ENCODE measurements at regions of chr6 and their contacts with region 1.

Region 1: DNA sequence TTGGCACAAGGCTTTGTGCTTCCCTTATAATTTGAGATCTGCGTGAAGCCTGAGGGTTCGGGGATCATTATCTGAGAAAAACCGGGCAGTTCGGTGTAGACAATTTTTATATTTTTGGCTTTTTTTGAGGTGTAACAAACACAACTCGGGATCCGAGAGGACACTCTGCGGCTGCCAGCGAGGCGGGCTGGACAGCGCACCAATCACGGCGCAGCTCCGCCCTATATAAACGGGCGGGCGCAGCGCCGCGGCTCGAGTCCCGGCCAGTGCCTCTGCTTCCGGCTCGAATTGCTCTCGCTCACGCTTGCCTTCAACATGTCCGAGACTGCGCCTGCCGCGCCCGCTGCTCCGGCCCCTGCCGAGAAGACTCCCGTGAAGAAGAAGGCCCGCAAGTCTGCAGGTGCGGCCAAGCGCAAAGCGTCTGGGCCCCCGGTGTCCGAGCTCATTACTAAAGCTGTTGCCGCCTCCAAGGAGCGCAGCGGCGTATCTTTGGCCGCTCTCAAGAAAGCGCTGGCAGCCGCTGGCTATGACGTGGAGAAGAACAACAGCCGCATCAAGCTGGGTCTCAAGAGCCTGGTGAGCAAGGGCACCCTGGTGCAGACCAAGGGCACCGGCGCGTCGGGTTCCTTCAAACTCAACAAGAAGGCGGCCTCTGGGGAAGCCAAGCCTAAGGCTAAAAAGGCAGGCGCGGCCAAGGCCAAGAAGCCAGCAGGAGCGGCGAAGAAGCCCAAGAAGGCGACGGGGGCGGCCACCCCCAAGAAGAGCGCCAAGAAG is 69.0 kb downstream of the HFE start:
- DNase-seq: peak; percentile 94
- H3K4me3 ChIP-seq: peak overlapping the region; percentile 62 to 80 (median 74)
- H3K27ac ChIP-seq: peak overlapping the region; percentile 88
- H3K4me1 ChIP-seq: peaks cover 31% of the 10 kb centered on the region
- H3K27me3 ChIP-seq: no peaks in the 10 kb centered on the region
- CTCF ChIP-seq: peak in 1 of 2 donors; percentile 12

Region 2: GRCh38 chr6:24313251-24314141 is 1842.8 kb before region 1 on chr6:
- CTCF ChIA-PET with region 1: interaction called, 11 read pairs
- dilution Hi-C with region 1: no loop called
- in situ Hi-C with region 1: no loop called
- intact Hi-C with region 1: no loop called
- DNase-seq: peak; percentile 46
- H3K4me3 ChIP-seq: no peak overlapping the region
- H3K27ac ChIP-seq: no peak overlapping the region
- H3K4me1 ChIP-seq: peaks cover 5% of the 10 kb centered on the region
- H3K27me3 ChIP-seq: no peaks in the 10 kb centered on the region
- CTCF ChIP-seq: no peak

Region 3: DNA sequence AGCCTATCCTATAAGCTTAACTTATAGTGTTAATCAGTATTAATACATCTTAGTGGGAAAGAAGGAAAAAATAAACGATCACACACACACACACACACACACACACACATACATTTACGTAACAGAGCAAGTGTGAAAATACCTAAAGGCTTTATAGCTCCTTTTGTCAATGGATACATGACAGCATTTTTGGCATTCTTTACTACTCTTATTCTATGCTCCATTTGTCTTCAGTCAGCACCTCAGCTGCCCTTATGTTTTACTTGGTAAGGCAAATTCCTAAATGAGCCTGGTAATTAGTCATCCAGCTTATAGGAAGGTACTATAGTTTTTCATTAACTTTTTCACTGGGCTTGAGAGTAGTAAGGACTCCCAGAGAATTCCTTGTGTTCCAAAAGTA is 257.1 kb before region 1 on chr6:
- CTCF ChIA-PET with region 1: no interaction called
- dilution Hi-C with region 1: no loop called
- in situ Hi-C with region 1: no loop called
- intact Hi-C with region 1: no loop called
- DNase-seq: no peak
- H3K4me3 ChIP-seq: no peak overlapping the region
- H3K27ac ChIP-seq: no peak overlapping the region
- H3K4me1 ChIP-seq: no peaks in the 10 kb centered on the region
- H3K27me3 ChIP-seq: no peaks in the 10 kb centered on the region
- CTCF ChIP-seq: no peak

Region 4: GRCh38 chr6:26031595-26032339 is 124.5 kb before region 1 on chr6:
- CTCF ChIA-PET with region 1: no interaction called
- dilution Hi-C with region 1: no loop called
- in situ Hi-C with region 1: no loop called
- intact Hi-C with region 1: loop called (anchors 2 kb)
- DNase-seq: peak; percentile 96
- H3K4me3 ChIP-seq: peak overlapping the region; percentile 53 to 62 (median 61)
- H3K27ac ChIP-seq: peak overlapping the region; percentile 85
- H3K4me1 ChIP-seq: peaks cover 26% of the 10 kb centered on the region
- H3K27me3 ChIP-seq: no peaks in the 10 kb centered on the region
- CTCF ChIP-seq: peak; percentile 5 to 23

Region 5: GRCh38 chr6:26043384-26044139 is 112.7 kb before region 1 on chr6:
- CTCF ChIA-PET with region 1: no interaction called
- dilution Hi-C with region 1: no loop called
- in situ Hi-C with region 1: no loop called
- intact Hi-C with region 1: no loop called
- DNase-seq: peak; percentile 95
- H3K4me3 ChIP-seq: peak overlapping the region; percentile 37 to 43 (median 42)
- H3K27ac ChIP-seq: peak overlapping the region; percentile 79
- H3K4me1 ChIP-seq: peaks cover 27% of the 10 kb centered on the region
- H3K27me3 ChIP-seq: no peaks in the 10 kb centered on the region
- CTCF ChIP-seq: no peak

Region 6: GRCh38 chr6:26103770-26104456 is 52.4 kb before region 1 on chr6:
- CTCF ChIA-PET with region 1: no interaction called
- dilution Hi-C with region 1: no loop called
- in situ Hi-C with region 1: no loop called
- intact Hi-C with region 1: loop called (anchors 1 kb)
- DNase-seq: peak; percentile 95
- H3K4me3 ChIP-seq: peak overlapping the region; percentile 45 to 47 (median 47)
- H3K27ac ChIP-seq: peak overlapping the region; percentile 93
- H3K4me1 ChIP-seq: peaks cover 8% of the 10 kb centered on the region
- H3K27me3 ChIP-seq: no peaks in the 10 kb centered on the region
- CTCF ChIP-seq: peak; percentile 33 to 45

Region 7: GRCh38 chr6:26175428-26176181 is 19.3 kb after region 1 on chr6:
- CTCF ChIA-PET with region 1: no interaction called
- dilution Hi-C with region 1: no loop called
- in situ Hi-C with region 1: no loop called
- intact Hi-C with region 1: loop called (anchors 1 kb)
- DNase-seq: peak; percentile 60
- H3K4me3 ChIP-seq: no peak overlapping the region
- H3K27ac ChIP-seq: no peak overlapping the region
- H3K4me1 ChIP-seq: peaks cover 3% of the 10 kb centered on the region
- H3K27me3 ChIP-seq: no peaks in the 10 kb centered on the region
- CTCF ChIP-seq: peak; percentile 52 to 64

Region 8: DNA sequence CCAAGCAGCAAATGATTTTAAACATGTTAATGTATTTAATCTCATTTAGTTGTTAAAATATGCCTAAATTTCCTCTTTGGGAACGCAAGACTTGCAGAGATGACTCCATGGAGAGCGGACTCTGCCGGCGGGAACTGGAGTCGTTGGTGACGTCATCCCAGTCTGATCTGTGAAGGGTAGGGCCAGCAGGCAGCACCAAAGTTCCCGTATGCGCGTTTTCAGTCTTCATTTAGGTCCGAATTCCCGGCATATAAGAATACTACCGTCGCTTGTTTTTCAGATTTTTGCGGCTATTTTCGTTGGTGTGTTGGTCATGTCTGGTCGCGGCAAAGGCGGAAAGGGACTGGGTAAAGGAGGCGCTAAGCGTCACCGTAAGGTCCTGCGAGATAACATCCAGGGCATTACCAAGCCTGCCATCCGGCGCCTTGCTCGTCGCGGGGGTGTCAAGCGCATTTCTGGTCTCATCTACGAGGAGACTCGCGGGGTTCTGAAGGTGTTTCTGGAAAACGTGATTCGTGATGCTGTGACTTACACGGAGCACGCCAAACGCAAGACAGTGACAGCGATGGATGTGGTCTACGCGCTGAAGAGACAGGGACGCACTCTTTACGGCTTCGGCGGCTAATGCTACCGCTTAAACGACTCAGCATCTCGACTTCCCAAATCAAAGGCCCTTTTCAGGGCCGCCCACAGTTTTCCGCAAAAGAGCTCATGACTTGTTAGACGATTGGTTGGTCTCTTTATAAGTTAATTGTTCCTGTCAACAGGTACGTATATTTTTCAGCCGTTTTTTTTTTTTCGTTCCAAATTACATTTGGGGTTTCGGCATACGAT is 48.3 kb after region 1 on chr6:
- CTCF ChIA-PET with region 1: no interaction called
- dilution Hi-C with region 1: loop called (anchors 5 kb)
- in situ Hi-C with region 1: no loop called
- intact Hi-C with region 1: loop called (anchors 1 kb)
- DNase-seq: peak; percentile 95
- H3K4me3 ChIP-seq: peak overlapping the region; percentile 67 to 73 (median 71)
- H3K27ac ChIP-seq: peak overlapping the region; percentile 97
- H3K4me1 ChIP-seq: peaks cover 19% of the 10 kb centered on the region
- H3K27me3 ChIP-seq: no peaks in the 10 kb centered on the region
- CTCF ChIP-seq: peak; percentile 11 to 36

Region 9: GRCh38 chr6:26401987-26402658 is 245.9 kb after region 1 on chr6 and contains the start of gene BTN3A1:
- CTCF ChIA-PET with region 1: no interaction called
- dilution Hi-C with region 1: no loop called
- in situ Hi-C with region 1: no loop called
- intact Hi-C with region 1: no loop called
- DNase-seq: peak; percentile 77
- H3K4me3 ChIP-seq: peak within 1 kb of the TSS; percentile 63 to 78 (median 68)
- H3K27ac ChIP-seq: peak within 1 kb of the TSS; percentile 76
- H3K4me1 ChIP-seq: no peaks in the 10 kb centered on the region
- H3K27me3 ChIP-seq: no peaks in the 10 kb centered on the region
- CTCF ChIP-seq: no peak
- total RNA-seq, gene BTN3A1: 5.1 to 7.3 TPM

Measured in mammary epithelial cell (primary cell).